GM12878 (cell line): ENCODE measurements at regions of chr13 and their contacts with region 1.

Region 1: DNA sequence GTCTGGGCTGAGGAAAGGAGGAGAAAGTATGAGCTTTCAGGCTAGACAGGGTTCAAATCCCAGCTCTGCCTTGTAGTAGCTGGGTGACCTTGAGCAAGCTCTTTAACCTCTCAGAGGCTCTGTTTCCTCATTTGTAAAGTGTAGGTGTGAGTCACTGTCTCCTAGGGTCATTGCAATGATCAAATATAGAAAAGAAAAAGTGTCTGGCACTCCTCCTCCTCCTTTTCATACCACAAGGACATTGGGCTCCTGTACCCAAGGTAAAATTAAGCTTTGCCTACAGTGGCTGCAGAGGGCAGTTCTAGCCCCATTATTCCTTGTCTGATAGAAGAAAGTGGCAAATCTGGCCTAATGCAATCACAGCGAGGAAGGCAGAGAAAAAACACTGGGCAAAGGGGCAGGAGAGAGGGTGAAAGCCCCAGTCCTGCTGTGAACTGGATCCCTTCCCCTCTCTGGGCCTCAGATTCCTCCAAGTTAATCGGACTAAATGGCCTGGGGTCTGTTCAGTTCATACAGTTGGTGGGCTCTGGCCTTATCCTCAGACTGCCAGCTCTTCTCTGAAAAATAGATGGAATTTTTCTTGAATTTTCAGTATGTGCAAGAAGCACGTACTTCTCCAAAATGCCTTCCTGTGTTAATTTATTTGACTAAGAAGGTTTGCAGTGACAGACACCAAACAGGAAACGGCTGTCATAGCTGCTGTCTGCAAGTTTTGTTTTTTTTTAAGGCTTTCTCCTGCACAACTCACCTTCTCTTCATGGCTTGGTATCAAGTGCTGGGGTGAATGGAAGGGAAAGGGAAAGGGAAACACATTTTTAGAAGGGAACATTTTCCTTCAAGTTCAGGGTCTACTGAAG is 35.3 kb downstream of the RGCC start:
- DNase-seq: no peak
- ATAC-seq: peak; percentile 76
- H3K4me3 ChIP-seq: peak overlapping the region; percentile 5; the same call in 1 of the 2 replicates
- H3K27ac ChIP-seq: peak overlapping the region; percentile 53
- H3K4me1 ChIP-seq: peaks cover 29% of the 10 kb centered on the region
- H3K27me3 ChIP-seq: no peaks in the 10 kb centered on the region; a peak in 1 of 4 replicates
- CTCF ChIP-seq: no peak
- EP300 ChIP-seq: peak; percentile 32 to 39; a peak in 1 of 4 replicates
- POLR2A ChIP-seq: no peak
- RAD21 ChIP-seq: no peak

Region 2: GRCh38 chr13:41458761-41459431 is 33.7 kb before region 1 on chr13:
- CTCF ChIA-PET with region 1: interaction called, 16 read pairs
- POLR2A ChIA-PET with region 1: interaction called, 4 read pairs
- RAD21 ChIA-PET with region 1: interaction called, 9 read pairs
- SMC1A ChIA-PET with region 1: interaction called, 12 read pairs
- in situ Hi-C with region 1: no loop called
- intact Hi-C with region 1: no loop called
- DNase-seq: no peak
- ATAC-seq: peak; percentile 59
- H3K4me3 ChIP-seq: peak overlapping the region; percentile 80; the same call in 1 of the 2 replicates
- H3K27ac ChIP-seq: no peak overlapping the region
- H3K4me1 ChIP-seq: peaks cover 51% of the 10 kb centered on the region
- H3K27me3 ChIP-seq: peaks cover 0 to 7% of the 10 kb centered on the region in 2 experiments; a peak in 2 of 4 replicates
- CTCF ChIP-seq: peak; percentile 64 to 90 (median 86)
- EP300 ChIP-seq: no peak
- POLR2A ChIP-seq: no peak
- RAD21 ChIP-seq: peak; percentile 64

Region 3: GRCh38 chr13:41467425-41467945 is 25.1 kb before region 1 on chr13:
- CTCF ChIA-PET with region 1: interaction called, 4 read pairs
- POLR2A ChIA-PET with region 1: interaction called, 4 read pairs
- RAD21 ChIA-PET with region 1: interaction called, 10 read pairs
- SMC1A ChIA-PET with region 1: interaction called, 7 read pairs
- in situ Hi-C with region 1: no loop called
- intact Hi-C with region 1: no loop called
- DNase-seq: no peak
- ATAC-seq: no peak
- H3K4me3 ChIP-seq: no peak overlapping the region
- H3K27ac ChIP-seq: no peak overlapping the region
- H3K4me1 ChIP-seq: peaks cover 41% of the 10 kb centered on the region
- H3K27me3 ChIP-seq: no peaks in the 10 kb centered on the region
- CTCF ChIP-seq: no peak
- EP300 ChIP-seq: no peak
- POLR2A ChIP-seq: no peak
- RAD21 ChIP-seq: no peak